ENCODE measurements at regions of chr11 and their contacts with region 1.

Region 1: GRCh38 chr11:106087815-106088435 is 10.5 kb downstream of the AASDHPPT start:
- DNase-seq: peak; percentile 83
- ATAC-seq: peak; percentile 63
- H3K4me3 ChIP-seq: no peak overlapping the region
- H3K27ac ChIP-seq: no peak overlapping the region
- H3K4me1 ChIP-seq: peaks cover 24% of the 10 kb centered on the region
- H3K27me3 ChIP-seq: no peaks in the 10 kb centered on the region
- CTCF ChIP-seq: peak; percentile 99

Region 2: DNA sequence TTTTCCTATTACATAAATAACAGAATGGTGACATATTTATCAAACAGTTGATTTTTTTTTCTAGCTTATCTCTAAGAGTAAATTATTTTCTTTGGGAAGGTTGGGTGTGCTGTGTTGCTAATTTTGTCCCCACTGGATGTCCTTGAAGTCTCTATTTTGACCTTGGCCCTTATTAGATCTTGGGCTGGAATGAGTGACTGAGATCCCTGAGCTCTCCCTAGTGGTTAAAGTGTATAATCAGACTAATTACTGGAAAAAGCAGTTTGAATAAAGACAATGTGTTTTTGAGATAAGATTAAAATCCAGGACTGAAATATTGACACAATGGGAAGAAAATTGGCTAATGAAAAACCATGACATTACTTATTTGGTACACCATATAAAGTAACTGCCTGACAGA is 45.6 kb after region 1 on chr11:
- CTCF ChIA-PET with region 1: no interaction called
- POLR2A ChIA-PET with region 1: no interaction called
- intact Hi-C with region 1: loop called (anchors 1 kb)
- DNase-seq: peak; percentile 32
- ATAC-seq: 0 out of 2 replicates have a peak, but pooled peaks have one; percentile 28
- H3K4me3 ChIP-seq: no peak overlapping the region
- H3K27ac ChIP-seq: no peak overlapping the region
- H3K4me1 ChIP-seq: peaks cover 6% of the 10 kb centered on the region
- H3K27me3 ChIP-seq: no peaks in the 10 kb centered on the region
- CTCF ChIP-seq: peak; percentile 71

Region 3: DNA sequence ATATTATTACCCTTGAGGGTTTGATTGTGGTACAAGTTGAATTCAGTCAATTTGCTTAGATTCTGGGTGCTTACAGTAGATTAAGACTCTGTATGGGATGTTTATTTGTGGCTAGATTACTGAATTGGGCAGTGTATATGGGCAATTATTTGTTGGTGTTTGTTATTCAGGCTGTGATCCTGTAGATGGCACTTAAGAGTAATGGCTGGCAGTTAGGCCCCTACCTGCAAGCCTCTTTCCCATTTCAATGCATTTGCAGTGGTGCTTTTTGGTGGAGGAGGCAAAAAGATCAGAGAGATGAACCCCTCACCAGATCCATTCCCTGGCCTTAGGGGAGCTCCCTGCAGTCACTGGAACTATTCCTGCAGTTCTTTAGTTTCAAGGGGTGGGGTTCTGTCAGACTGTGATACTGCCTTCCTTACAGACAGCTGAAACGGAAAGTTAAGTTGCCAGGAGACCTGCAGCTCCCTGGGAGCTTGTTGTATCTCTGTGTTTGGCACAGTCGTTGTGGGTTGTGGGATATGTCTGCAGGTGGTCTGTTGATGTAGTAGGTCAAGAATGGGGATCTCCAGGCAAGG is 189.0 kb after region 1 on chr11:
- CTCF ChIA-PET with region 1: no interaction called
- POLR2A ChIA-PET with region 1: no interaction called
- intact Hi-C with region 1: loop called (anchors 10 kb)
- DNase-seq: peak; percentile 62
- ATAC-seq: peak; percentile 61
- H3K4me3 ChIP-seq: no peak overlapping the region
- H3K27ac ChIP-seq: no peak overlapping the region
- H3K4me1 ChIP-seq: peaks cover 28% of the 10 kb centered on the region
- H3K27me3 ChIP-seq: no peaks in the 10 kb centered on the region
- CTCF ChIP-seq: peak; percentile 87

Region 4: DNA sequence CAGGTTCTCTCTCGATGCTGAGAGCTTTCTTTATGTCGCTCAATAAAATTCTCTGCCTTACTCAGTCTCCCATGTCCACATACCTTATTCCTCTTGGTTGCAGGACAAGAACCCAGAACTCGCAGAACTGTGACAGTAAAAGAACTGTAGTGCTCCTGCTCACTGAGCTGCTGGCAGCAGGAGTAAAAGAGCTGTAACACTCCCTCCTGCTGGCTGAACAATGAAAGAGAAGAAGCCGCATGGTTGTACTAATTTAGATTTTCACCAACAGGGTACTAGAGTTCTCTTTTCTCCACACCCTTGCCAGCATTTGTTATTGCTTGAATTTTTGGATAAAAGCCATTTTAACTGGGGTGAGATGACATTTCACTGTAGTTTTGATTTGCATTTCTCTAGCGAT is 497.1 kb after region 1 on chr11:
- CTCF ChIA-PET with region 1: no interaction called
- POLR2A ChIA-PET with region 1: no interaction called
- intact Hi-C with region 1: loop called (anchors 2 kb)
- DNase-seq: peak; percentile 77
- ATAC-seq: peak; percentile 95
- H3K4me3 ChIP-seq: no peak overlapping the region
- H3K27ac ChIP-seq: no peak overlapping the region
- H3K4me1 ChIP-seq: no peaks in the 10 kb centered on the region
- H3K27me3 ChIP-seq: no peaks in the 10 kb centered on the region
- CTCF ChIP-seq: peak; percentile 88

Region 5: GRCh38 chr11:107043242-107044006 is 955.5 kb after region 1 on chr11:
- CTCF ChIA-PET with region 1: no interaction called
- POLR2A ChIA-PET with region 1: no interaction called
- intact Hi-C with region 1: loop called (anchors 10 kb)
- DNase-seq: peak; percentile 81
- ATAC-seq: peak; percentile 73
- H3K4me3 ChIP-seq: no peak overlapping the region
- H3K27ac ChIP-seq: peak overlapping the region; percentile 20
- H3K4me1 ChIP-seq: peaks cover 19% of the 10 kb centered on the region
- H3K27me3 ChIP-seq: no peaks in the 10 kb centered on the region
- CTCF ChIP-seq: no peak